Psoas muscle (tissue), 8 donors: ENCODE measurements at regions of chr10 and their contacts with region 1.

Region 1: GRCh38 chr10:4663162-4663904 is 162.7 kb upstream of the AKR1E2 start:
- DNase-seq: peak; percentile 52 to 70
- ATAC-seq: peak; percentile 81 to 91 (median 85)
- H3K4me3 ChIP-seq: peak overlapping the region; percentile 55
- H3K27ac ChIP-seq: peak overlapping the region; percentile 91
- H3K4me1 ChIP-seq: peaks cover 38% of the 10 kb centered on the region
- H3K27me3 ChIP-seq: no peaks in the 10 kb centered on the region
- CTCF ChIP-seq: no peak

Region 2: GRCh38 chr10:3785257-3785850 is 878.0 kb before region 1 on chr10:
- intact Hi-C with region 1: loop called in 1 of 2 experiments (anchors 5 kb)
- DNase-seq: peak; percentile 99 to 100
- ATAC-seq: peak; percentile 69 to 84 (median 78)
- H3K4me3 ChIP-seq: peak overlapping the region; percentile 95
- H3K27ac ChIP-seq: peak overlapping the region; percentile 100
- H3K4me1 ChIP-seq: peaks cover 10% of the 10 kb centered on the region
- H3K27me3 ChIP-seq: no peaks in the 10 kb centered on the region
- CTCF ChIP-seq: no peak

Region 3: DNA sequence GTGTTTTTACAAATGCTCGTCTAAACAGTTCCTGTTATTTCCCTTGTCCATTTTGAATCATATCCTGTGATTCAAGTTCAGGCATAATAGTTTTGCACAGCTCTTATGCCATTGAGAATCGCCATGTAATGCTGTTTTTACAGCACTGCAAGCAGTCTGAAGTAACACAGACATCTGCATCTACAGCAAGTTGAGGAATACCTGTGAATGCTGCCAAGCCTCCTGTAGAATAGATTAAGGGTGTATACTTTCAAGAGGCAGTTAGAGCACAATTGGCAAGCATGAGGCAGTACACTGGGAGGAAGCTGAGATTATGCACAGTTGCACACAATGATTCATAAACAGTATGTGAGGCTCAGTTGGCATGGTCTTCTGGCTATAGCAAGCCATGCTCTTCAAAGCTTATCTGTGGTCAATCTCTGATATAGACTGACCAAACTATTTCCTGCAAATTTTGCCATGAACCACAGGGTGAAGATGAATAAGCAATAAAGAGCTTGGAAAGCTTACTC is 40.8 kb after region 1 on chr10:
- intact Hi-C with region 1: no loop called
- DNase-seq: no peak
- ATAC-seq: peak; percentile 54 to 72 (median 65)
- H3K4me3 ChIP-seq: no peak overlapping the region
- H3K27ac ChIP-seq: peak overlapping the region; percentile 0
- H3K4me1 ChIP-seq: no peaks in the 10 kb centered on the region
- H3K27me3 ChIP-seq: no peaks in the 10 kb centered on the region
- CTCF ChIP-seq: no peak

Region 4: GRCh38 chr10:4807761-4808507 is 144.6 kb after region 1 on chr10:
- intact Hi-C with region 1: no loop called
- DNase-seq: no peak
- ATAC-seq: no peak
- H3K4me3 ChIP-seq: no peak overlapping the region
- H3K27ac ChIP-seq: no peak overlapping the region
- H3K4me1 ChIP-seq: no peaks in the 10 kb centered on the region
- H3K27me3 ChIP-seq: peaks cover 0 to 2% (median 0%) of the 10 kb centered on the region in 3 donors
- CTCF ChIP-seq: no peak